ENCODE measurements at regions of chr5 and their contacts with region 1.

Region 1: GRCh38 chr5:113294311-113295110 is 140.3 kb downstream of the TSSK1B start:
- DNase-seq: peak; percentile 92 to 97 (median 96)
- ATAC-seq: peak; percentile 98
- H3K4me3 ChIP-seq: peak overlapping the region; percentile 72
- H3K27ac ChIP-seq: peak overlapping the region; percentile 87
- H3K4me1 ChIP-seq: peaks cover 14% of the 10 kb centered on the region
- H3K27me3 ChIP-seq: no peaks in the 10 kb centered on the region

Region 2: GRCh38 chr5:113084402-113085083 is 210.0 kb before region 1 on chr5:
- intact Hi-C with region 1: loop called in 1 of 4 experiments (anchors 5 kb)
- DNase-seq: no peak
- ATAC-seq: peak; percentile 58 to 64
- H3K4me3 ChIP-seq: no peak overlapping the region
- H3K27ac ChIP-seq: no peak overlapping the region
- H3K4me1 ChIP-seq: peaks cover 13% of the 10 kb centered on the region
- H3K27me3 ChIP-seq: no peaks in the 10 kb centered on the region

Region 3: GRCh38 chr5:113204525-113205161 is 89.9 kb before region 1 on chr5:
- intact Hi-C with region 1: loop called in 2 of 4 experiments (anchors 5 to 10 kb)
- DNase-seq: peak; percentile 63 to 77 (median 76)
- ATAC-seq: peak; percentile 46 to 63
- H3K4me3 ChIP-seq: no peak overlapping the region
- H3K27ac ChIP-seq: no peak overlapping the region
- H3K4me1 ChIP-seq: peaks cover 13% of the 10 kb centered on the region
- H3K27me3 ChIP-seq: no peaks in the 10 kb centered on the region

Region 4: DNA sequence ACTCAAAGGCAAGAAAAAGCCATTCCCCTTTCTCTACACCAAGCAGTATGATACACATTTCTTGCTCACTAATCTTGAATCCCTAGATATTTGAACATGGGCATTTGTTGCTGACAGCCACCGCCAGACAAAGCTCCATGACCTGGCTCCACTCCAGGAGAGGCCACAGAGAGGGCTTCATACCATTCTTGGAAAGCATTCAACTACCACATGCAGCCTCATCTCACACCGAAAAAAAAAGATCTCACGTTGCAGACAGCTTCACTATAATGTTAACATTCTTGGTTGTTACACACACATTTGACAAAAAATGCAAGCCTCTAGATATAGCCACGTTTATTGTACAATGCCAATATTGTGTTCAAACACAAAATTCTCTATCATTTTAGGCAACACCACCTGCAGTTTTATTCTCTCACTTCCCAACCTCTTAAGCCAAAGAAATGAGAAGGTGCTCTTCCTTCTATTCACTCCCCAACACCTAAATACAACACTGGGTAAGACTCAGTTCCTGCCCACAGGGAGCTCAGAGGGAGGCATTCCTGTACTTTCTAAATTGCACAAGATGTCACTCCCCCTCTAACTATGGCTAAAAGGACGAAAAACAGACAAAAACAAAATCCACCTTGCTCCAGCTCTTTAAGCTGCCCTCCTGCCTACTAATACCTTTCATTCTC is 82.1 kb before region 1 on chr5:
- intact Hi-C with region 1: loop called in 3 of 4 experiments (anchors 5 to 10 kb)
- DNase-seq: peak; percentile 43 to 72 (median 67)
- ATAC-seq: no peak
- H3K4me3 ChIP-seq: no peak overlapping the region
- H3K27ac ChIP-seq: no peak overlapping the region
- H3K4me1 ChIP-seq: peaks cover 15% of the 10 kb centered on the region
- H3K27me3 ChIP-seq: no peaks in the 10 kb centered on the region

Region 5: GRCh38 chr5:113574417-113574816 is 279.9 kb after region 1 on chr5:
- intact Hi-C with region 1: no loop called
- DNase-seq: peak; percentile 18 to 62 (median 37)
- ATAC-seq: peak; percentile 31 to 45
- H3K4me3 ChIP-seq: no peak overlapping the region
- H3K27ac ChIP-seq: no peak overlapping the region
- H3K4me1 ChIP-seq: no peaks in the 10 kb centered on the region
- H3K27me3 ChIP-seq: no peaks in the 10 kb centered on the region

Region 6: DNA sequence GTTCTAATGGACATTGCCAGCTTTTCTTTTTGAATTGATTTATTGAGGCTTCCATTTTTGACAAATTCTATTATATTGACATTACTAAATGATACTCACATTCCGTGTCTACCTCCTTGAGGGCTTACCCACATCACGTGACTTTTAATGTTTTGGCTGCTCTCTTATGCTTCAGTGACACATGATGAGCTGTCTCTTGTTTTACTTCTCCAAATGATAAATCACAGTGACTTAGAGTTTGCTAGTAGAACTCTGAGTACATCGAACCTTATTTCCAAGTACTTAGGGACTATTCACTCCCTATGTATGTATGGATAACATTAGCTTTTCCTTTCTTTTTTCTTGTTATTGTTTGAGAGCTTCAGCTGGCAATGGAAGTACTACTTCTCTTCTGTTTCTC is 897.6 kb after region 1 on chr5:
- intact Hi-C with region 1: no loop called
- DNase-seq: no peak
- ATAC-seq: no peak
- H3K4me3 ChIP-seq: no peak overlapping the region
- H3K27ac ChIP-seq: no peak overlapping the region
- H3K4me1 ChIP-seq: no peaks in the 10 kb centered on the region
- H3K27me3 ChIP-seq: no peaks in the 10 kb centered on the region

Measured in right cardiac atrium (tissue), 5 donors.